SK-N-SH (cell line): ENCODE measurements at regions of chr2 and their contacts with region 1.

Region 1: GRCh38 chr2:37993143-37993542 is 68.1 kb downstream of the RMDN2 start:
- DNase-seq: no peak
- H3K4me3 ChIP-seq: no peak overlapping the region
- H3K27ac ChIP-seq: no peak overlapping the region
- H3K4me1 ChIP-seq: no peaks in the 10 kb centered on the region
- H3K27me3 ChIP-seq: no peaks in the 10 kb centered on the region
- CTCF ChIP-seq: peak; percentile 27; the same call in 1 of the 2 replicates
- EP300 ChIP-seq: no peak
- RAD21 ChIP-seq: peak; percentile 21; the same call in 1 of the 2 replicates

Region 2: DNA sequence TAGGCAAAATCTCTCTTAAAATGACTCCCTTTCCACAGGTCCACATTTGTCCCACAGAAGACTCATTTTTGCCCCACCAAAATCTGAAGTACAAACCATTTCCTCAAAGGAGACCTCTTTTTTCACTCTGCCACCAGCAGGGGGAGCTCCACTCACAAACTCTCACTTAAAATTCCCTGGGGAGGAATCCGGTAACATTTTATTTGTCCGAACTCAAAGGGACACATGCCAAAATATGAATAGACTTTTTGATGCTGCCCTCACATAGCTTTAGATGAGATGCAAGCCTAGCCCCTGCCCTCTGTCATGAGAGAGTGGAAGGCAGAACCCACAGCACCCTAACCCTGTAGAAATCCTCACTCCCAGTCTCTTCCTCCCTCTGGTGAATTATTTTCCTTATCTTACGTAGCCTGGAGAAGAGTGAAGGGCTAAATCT is 11.0 kb before region 1 on chr2:
- CTCF ChIA-PET with region 1: interaction called, 27 read pairs
- POLR2A ChIA-PET with region 1: no interaction called
- DNase-seq: peak; percentile 60
- H3K4me3 ChIP-seq: peak overlapping the region; percentile 2 to 25; a peak in 1 of 4 replicates
- H3K27ac ChIP-seq: 0 out of 4 replicates have a peak overlapping the region, but pooled peaks of 1 of the 2 experiments have one; percentile 2
- H3K4me1 ChIP-seq: peaks cover 0 to 3% of the 10 kb centered on the region in 2 experiments; a peak in 2 of 4 replicates
- H3K27me3 ChIP-seq: no peaks in the 10 kb centered on the region
- CTCF ChIP-seq: peak; percentile 99
- EP300 ChIP-seq: no peak
- RAD21 ChIP-seq: peak; percentile 78